ENCODE measurements at regions of chr4 and their contacts with region 1.

Region 1: GRCh38 chr4:185425647-185426352 is at the start of gene UFSP2:
- DNase-seq: peak; percentile 92
- ATAC-seq: peak; percentile 86
- H3K4me3 Mint-ChIP-seq: peak within 1 kb of the TSS; percentile 89
- H3K27ac Mint-ChIP-seq: peak within 1 kb of the TSS; percentile 99
- H3K4me1 Mint-ChIP-seq: peaks cover 17% of the 10 kb centered on the region
- H3K27me3 Mint-ChIP-seq: no peaks in the 10 kb centered on the region
- CTCF ChIP-seq: no peak
- total RNA-seq, gene UFSP2: 20.1 and 21.6 TPM in 2 replicates

Region 2: DNA sequence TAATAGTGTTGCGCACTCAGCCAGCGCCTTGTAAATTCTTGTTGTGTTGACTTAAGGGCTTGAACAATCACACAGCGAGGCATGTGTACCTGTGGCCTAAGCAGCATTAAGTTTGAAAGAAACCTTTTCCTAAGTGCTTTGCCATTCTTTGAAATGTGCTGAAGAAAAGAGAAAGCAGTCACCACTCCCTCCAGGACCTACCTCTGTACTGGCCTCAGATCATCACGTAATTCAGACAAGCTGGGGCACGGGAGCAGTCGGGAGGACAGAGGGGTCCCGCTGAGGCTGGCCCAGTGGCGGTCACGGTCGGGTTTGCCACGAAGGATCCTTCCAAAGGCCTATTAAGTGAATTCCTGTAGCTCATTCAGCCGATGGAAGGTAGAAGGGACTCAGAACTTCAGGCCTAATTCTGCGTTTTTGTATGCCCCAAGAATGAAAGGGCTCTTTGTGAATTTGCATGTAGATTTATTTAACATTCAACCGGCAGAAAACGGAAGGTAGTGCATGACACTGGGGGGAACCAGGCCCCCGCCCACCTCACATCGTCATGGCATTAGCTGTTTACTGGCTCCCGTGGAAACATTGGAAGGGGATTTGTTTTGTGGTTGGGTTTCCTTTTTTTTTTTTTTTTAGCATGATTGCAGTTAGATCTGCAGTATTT is 1660.4 kb before region 1 on chr4:
- CTCF ChIA-PET with region 1: no interaction called
- POLR2A ChIA-PET with region 1: no interaction called
- intact Hi-C with region 1: no loop called
- DNase-seq: no peak
- ATAC-seq: no peak
- H3K4me3 Mint-ChIP-seq: no peak overlapping the region
- H3K27ac Mint-ChIP-seq: no peak overlapping the region
- H3K4me1 Mint-ChIP-seq: no peaks in the 10 kb centered on the region
- H3K27me3 Mint-ChIP-seq: peaks cover 2% of the 10 kb centered on the region
- CTCF ChIP-seq: no peak

Region 3: DNA sequence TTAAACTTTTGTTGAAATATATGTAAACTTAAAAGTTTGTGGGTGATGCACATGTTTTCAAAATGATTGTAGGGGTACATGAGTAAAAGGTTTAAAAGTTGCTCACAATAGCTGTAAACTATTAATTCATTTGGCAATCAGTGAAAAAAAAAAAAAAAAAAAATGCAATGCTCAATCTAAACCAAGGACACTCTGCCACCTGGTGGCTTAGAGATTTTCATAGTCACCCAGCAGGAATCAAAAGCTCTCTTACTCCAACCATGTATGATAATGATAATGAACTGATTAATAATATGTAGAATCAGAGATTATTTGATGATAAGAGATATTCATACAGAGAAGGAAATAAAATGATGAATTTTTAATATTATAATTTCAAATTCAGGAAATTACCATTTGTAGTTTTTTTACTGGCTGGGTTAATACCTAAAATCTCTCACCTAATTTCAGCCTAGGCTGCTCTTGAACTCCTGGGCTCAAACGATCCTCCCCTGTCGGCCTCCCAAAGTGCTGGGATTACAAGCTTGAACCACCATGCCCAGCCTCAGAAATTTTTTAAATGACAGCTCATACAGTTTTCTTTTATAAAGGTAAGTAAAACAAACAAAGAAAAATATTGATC is 329.7 kb before region 1 on chr4:
- CTCF ChIA-PET with region 1: no interaction called
- POLR2A ChIA-PET with region 1: no interaction called
- intact Hi-C with region 1: no loop called
- DNase-seq: no peak
- ATAC-seq: no peak
- H3K4me3 Mint-ChIP-seq: no peak overlapping the region
- H3K27ac Mint-ChIP-seq: no peak overlapping the region
- H3K4me1 Mint-ChIP-seq: no peaks in the 10 kb centered on the region
- H3K27me3 Mint-ChIP-seq: peaks cover 18% of the 10 kb centered on the region
- CTCF ChIP-seq: no peak

Region 4: GRCh38 chr4:185203486-185204237 is 222.1 kb before region 1 on chr4 and contains the start of gene CFAP97:
- CTCF ChIA-PET with region 1: no interaction called
- POLR2A ChIA-PET with region 1: no interaction called
- intact Hi-C with region 1: loop called (anchors 1 kb)
- DNase-seq: peak; percentile 82
- ATAC-seq: peak; percentile 81
- H3K4me3 Mint-ChIP-seq: peak within 1 kb of the TSS; percentile 93
- H3K27ac Mint-ChIP-seq: peak within 1 kb of the TSS; percentile 97
- H3K4me1 Mint-ChIP-seq: peaks cover 47% of the 10 kb centered on the region
- H3K27me3 Mint-ChIP-seq: no peaks in the 10 kb centered on the region
- CTCF ChIP-seq: no peak
- total RNA-seq, gene CFAP97: 42.6 and 44.1 TPM in 2 replicates

Region 5: DNA sequence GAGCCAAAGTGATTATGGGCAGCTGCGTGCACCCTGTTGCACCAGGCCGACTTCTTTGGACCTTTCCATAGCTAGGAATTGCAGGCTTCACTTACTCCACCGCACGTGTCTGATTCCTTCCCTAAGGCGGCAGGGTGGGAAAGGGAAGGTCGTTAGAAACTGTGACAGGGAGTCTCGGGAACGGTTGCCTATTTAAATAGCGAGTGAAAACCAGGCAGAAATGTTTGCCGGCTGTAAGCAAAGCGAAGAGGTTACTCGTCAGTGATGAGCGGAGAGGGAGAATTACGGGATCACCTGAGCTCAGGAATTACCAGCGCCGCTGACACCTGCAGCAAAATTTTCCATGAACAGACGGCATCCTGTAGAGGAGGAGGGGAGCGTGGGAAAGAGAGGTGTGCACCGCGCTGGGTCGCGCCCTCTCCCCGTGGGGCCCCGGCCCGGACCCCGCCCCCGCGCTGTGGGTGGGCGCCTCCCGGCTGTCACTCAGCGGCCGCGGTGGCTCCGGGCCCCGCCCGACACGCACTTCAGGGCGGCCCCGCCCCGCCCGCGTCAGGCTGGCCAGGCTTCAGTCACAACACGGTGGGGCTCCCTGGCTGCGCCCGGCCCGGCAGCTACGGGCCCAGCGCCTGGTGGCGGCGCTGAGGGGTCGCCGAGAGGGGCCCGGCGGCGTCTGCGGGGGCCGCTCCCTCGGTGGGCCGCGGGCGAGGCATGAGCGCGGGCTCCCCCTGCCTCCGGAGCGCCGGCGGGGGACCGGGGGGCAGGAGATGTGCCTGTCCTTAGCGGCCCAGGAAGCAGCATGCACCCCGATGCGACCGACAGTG is 216.6 kb before region 1 on chr4 and contains the start of gene SNX25:
- CTCF ChIA-PET with region 1: no interaction called
- POLR2A ChIA-PET with region 1: no interaction called
- intact Hi-C with region 1: loop called (anchors 1 kb)
- DNase-seq: peak; percentile 94
- ATAC-seq: peak; percentile 83
- H3K4me3 Mint-ChIP-seq: peak within 1 kb of the TSS; percentile 95
- H3K27ac Mint-ChIP-seq: peak within 1 kb of the TSS; percentile 94
- H3K4me1 Mint-ChIP-seq: peaks cover 63% of the 10 kb centered on the region
- H3K27me3 Mint-ChIP-seq: no peaks in the 10 kb centered on the region
- CTCF ChIP-seq: no peak
- total RNA-seq, gene SNX25: 53.1 and 53.7 TPM in 2 replicates

Region 6: DNA sequence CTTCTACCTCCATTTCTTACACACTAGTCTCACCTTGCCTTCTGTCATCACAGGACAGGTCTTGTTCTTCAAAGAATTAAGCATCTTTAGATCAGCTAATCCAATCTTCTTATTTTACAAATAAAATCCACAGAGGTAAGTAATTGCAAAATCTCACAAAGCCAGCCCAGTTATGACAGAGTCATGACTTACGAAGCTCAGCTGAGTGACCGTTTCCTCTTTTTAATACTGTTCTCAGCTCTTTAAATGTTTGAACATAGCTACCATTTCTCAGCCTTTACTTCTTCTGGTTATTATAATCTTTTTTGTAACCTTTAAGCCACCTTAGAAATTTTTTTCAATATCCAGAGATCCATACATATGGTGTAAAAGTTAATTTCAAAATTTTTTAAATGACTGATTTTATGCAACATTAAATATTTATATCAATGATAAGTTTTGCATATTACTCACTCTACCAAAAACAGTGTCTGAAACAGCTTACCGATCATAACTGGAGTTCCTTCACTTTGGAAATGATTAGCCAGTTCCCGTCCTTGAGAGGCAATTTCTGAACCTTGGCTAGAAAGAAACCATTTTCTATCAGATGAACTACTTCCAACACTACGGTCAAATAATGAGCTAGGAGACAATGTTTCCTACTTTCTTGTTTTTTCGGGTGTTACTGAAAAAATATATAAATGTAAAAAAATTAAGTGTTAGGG is 20.4 kb before region 1 on chr4:
- CTCF ChIA-PET with region 1: no interaction called
- POLR2A ChIA-PET with region 1: interaction called, 17 read pairs
- intact Hi-C with region 1: loop called (anchors 2 kb)
- DNase-seq: no peak
- ATAC-seq: peak; percentile 87
- H3K4me3 Mint-ChIP-seq: peak overlapping the region; percentile 6
- H3K27ac Mint-ChIP-seq: peak overlapping the region; percentile 80
- H3K4me1 Mint-ChIP-seq: peaks cover 12% of the 10 kb centered on the region
- H3K27me3 Mint-ChIP-seq: no peaks in the 10 kb centered on the region
- CTCF ChIP-seq: no peak

Region 7: DNA sequence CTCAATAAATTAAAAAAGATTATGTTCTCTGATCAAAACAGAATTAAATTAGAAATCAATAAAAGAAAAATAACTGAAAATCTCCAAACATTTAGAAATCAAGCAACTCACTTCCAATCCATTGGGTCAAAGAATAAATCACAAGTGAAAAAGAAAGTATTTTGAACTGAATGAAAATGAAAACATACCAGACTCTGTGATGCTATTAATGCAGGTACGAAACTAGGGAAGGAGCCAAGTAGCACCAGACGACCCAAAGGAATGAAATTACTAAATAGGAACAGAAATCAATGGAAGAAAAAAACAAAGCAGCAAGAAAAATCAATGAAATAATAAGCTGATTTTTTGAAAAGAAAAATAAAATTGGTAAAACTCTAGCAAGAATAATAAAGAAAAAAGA is 30.3 kb after region 1 on chr4:
- CTCF ChIA-PET with region 1: no interaction called
- POLR2A ChIA-PET with region 1: no interaction called
- intact Hi-C with region 1: no loop called
- DNase-seq: no peak
- ATAC-seq: no peak
- H3K4me3 Mint-ChIP-seq: no peak overlapping the region
- H3K27ac Mint-ChIP-seq: no peak overlapping the region
- H3K4me1 Mint-ChIP-seq: no peaks in the 10 kb centered on the region
- H3K27me3 Mint-ChIP-seq: peaks cover 21% of the 10 kb centered on the region
- CTCF ChIP-seq: no peak

Region 8: DNA sequence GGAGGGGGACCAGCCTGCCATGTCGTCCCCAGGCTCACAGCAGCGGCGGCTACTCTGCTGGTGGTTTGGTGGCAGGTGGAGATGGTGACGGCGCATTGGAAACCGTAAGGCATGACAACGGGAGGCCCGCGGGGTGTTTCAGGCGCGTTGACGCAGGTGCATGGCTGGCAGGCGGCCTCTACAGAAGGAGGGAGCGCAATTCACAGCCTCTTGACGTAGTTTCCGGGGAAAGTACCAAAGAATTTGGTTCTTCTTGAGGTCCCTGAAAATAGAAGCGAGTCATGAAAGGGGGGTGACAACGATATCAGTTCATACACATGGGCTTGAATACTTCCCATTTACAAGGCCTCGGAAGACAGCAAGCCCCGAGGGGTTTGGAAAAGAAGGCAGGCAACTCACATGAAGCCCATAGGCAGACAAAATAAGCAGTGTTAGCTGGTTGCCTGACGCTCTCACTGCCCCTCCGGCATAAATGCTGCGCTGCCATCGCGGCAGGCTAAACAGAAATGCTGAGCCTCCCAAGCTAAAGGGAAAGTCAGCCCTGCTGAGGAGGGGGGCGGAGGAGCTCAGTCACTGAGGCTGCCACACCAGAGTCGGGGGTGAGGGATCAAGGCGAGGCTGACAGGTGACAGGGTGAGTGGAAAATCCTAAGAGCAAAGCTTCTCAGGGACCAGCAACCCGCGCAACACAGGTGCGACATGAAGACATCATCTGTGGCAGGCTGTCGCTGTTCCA is 161.8 kb after region 1 on chr4:
- CTCF ChIA-PET with region 1: no interaction called
- POLR2A ChIA-PET with region 1: interaction called, 3 read pairs
- intact Hi-C with region 1: loop called (anchors 1 kb)
- DNase-seq: peak; percentile 66
- ATAC-seq: peak; percentile 92
- H3K4me3 Mint-ChIP-seq: peak overlapping the region; percentile 82
- H3K27ac Mint-ChIP-seq: peak overlapping the region; percentile 95
- H3K4me1 Mint-ChIP-seq: peaks cover 20% of the 10 kb centered on the region
- H3K27me3 Mint-ChIP-seq: peaks cover 26% of the 10 kb centered on the region
- CTCF ChIP-seq: no peak

Region 9: DNA sequence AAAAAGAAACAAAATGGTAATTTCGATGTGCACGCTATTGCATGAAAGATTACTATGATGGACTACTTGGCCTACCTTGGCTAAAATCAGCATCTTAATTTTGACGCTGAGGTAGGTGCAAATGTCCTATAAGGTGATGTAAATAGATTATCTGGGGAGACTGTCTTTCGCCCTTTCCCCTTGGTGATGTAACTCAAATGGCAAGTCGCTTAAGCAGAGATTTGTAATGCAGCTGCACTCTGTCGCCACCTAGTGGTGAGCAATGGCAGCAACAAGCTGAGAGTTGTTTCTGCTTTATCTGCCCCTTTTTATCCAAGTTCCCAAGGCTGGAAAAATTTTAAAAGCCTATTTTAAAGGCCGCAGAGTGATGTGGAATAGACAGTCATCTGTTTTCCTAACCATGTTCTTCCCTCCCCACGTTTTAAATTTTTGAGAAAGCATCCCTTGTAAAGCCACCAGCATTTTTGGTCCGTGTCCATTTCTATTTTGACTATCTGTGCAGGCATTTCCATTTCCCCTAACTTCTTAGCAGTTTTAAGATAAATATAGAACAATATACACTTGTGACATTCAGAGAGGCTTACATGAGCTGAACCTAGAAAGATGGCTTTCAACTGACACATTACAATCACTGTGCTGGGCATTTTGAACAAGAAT is 171.9 kb after region 1 on chr4:
- CTCF ChIA-PET with region 1: interaction called, 16 read pairs
- POLR2A ChIA-PET with region 1: interaction called, 3 read pairs
- intact Hi-C with region 1: loop called (anchors 1 kb)
- DNase-seq: peak; percentile 49
- ATAC-seq: peak; percentile 72
- H3K4me3 Mint-ChIP-seq: no peak overlapping the region
- H3K27ac Mint-ChIP-seq: no peak overlapping the region
- H3K4me1 Mint-ChIP-seq: no peaks in the 10 kb centered on the region
- H3K27me3 Mint-ChIP-seq: peaks cover 19% of the 10 kb centered on the region
- CTCF ChIP-seq: peak; percentile 100

Region 10: DNA sequence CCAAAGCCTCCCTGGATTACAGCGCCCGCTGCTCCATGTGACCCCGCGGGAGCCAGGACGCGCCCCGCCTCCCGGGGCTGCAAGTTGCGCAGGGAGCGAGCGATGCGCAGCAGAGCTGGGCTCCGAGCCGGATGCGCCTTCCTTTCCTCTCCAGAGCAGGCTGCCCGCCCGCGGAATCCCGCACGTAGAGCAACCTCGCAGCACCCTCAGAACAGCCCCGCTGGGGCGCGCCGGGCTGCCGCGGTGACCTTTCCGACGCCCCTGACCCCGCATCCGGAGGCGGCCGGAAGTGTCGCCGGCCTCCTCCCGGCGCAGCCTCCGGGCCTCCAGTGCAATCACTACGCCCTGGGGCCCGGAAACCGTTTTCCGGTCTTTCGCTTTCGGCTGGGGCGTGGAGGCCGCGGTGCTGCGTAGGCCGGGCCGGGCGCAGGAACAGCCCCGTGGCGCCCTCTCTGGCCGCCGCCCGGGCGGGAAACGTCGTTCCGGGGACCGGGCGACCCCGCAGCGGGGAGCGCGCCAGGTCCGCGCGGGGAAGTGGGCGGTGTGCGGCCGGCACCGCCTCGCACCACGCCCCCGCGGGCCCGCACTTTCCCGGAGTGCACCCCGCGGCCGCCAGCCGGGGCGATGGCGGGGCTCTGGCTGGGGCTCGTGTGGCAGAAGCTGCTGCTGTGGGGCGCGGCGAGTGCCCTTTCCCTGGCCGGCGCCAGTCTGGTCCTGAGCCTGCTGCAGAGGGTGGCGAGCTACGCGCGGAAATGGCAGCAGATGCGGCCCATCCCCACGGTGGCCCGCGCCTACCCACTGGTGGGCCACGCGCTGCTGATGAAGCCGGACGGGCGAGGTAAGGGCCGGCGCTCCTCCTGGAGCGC is 765.6 kb after region 1 on chr4 and contains the start of gene CYP4V2:
- CTCF ChIA-PET with region 1: no interaction called
- POLR2A ChIA-PET with region 1: no interaction called
- intact Hi-C with region 1: loop called (anchors 5 kb)
- DNase-seq: peak; percentile 84
- ATAC-seq: peak; percentile 86
- H3K4me3 Mint-ChIP-seq: peak within 1 kb of the TSS; percentile 90
- H3K27ac Mint-ChIP-seq: peak within 1 kb of the TSS; percentile 88
- H3K4me1 Mint-ChIP-seq: peaks cover 26% of the 10 kb centered on the region
- H3K27me3 Mint-ChIP-seq: peaks cover 2% of the 10 kb centered on the region
- CTCF ChIP-seq: no peak
- total RNA-seq, gene CYP4V2: 7.7 and 9.5 TPM in 2 replicates